A673 (cell line): ENCODE measurements at regions of chr19 and their contacts with region 1.

Region 1: DNA sequence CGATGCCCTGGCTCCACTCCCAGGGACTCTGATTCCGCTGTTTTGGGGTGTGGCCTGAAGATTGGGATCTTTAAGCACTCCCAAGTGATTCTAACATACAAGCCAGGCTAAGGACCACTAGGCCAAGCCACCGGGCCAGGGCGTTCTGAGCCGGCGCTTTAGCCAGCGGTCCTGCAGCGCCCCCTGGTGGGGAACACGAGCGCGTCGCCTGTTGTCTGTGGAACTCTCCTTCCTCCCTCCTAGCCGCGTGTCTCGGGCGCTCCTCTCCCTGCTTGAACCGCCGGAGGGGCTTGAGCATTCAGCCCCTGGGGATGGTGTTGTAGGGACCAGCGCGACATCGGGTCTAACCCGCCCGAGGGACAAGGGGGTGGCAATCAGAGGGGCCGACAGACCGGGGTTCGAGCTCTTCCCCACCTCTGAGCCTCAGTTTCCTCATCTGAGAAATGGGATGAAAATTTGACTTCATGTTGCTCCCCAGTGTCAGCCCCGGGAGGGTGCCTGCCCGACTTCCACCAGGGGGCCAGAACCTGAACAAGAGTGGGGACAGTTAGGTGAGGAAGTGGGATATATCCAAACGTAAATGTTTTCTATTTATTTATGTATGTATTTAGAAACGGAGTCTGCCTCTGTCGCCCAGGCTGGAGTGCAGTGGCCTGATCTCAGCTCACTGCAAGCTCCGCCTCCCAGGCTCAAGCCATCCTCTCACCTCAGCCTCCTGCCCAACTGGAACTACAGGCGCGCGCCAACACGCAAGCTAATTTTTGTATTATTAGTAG is 18.0 kb upstream of the PNMA8B start:
- DNase-seq: peak; percentile 86
- H3K4me3 ChIP-seq: no peak overlapping the region
- H3K27ac ChIP-seq: no peak overlapping the region
- H3K4me1 ChIP-seq: no peaks in the 10 kb centered on the region
- H3K27me3 ChIP-seq: no peaks in the 10 kb centered on the region
- CTCF ChIP-seq: peak; percentile 97

Region 2: DNA sequence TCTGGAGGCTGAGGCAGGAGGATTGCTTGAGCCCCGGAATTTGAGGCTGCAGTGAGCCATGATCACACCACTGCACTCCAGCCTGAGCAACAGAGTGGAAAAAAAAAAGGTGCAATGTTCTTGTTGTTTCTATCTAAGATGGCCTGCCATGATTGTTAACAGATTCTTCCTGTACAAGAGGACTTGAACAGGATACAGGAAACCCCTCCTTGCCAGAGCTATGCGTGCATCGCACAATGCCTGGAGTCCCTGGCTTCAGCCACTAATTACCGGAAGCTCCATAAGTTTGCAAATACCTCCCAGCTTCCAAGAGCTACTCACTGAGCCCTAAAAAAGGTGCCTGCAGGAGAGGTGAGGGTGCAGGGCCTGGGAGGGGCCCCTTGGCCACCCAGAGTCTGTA is 229.9 kb before region 1 on chr19:
- CTCF ChIA-PET with region 1: interaction called, 3 read pairs
- POLR2A ChIA-PET with region 1: no interaction called
- intact Hi-C with region 1: loop called (anchors 2 kb)
- DNase-seq: peak; percentile 47
- H3K4me3 ChIP-seq: no peak overlapping the region
- H3K27ac ChIP-seq: no peak overlapping the region
- H3K4me1 ChIP-seq: no peaks in the 10 kb centered on the region
- H3K27me3 ChIP-seq: no peaks in the 10 kb centered on the region
- CTCF ChIP-seq: no peak

Region 3: GRCh38 chr19:46529622-46530462 is 16.2 kb after region 1 on chr19:
- CTCF ChIA-PET with region 1: no interaction called
- POLR2A ChIA-PET with region 1: no interaction called
- intact Hi-C with region 1: no loop called
- DNase-seq: peak; percentile 76
- H3K4me3 ChIP-seq: no peak overlapping the region
- H3K27ac ChIP-seq: no peak overlapping the region
- H3K4me1 ChIP-seq: peaks cover 10% of the 10 kb centered on the region
- H3K27me3 ChIP-seq: no peaks in the 10 kb centered on the region
- CTCF ChIP-seq: peak; percentile 93

Region 4: DNA sequence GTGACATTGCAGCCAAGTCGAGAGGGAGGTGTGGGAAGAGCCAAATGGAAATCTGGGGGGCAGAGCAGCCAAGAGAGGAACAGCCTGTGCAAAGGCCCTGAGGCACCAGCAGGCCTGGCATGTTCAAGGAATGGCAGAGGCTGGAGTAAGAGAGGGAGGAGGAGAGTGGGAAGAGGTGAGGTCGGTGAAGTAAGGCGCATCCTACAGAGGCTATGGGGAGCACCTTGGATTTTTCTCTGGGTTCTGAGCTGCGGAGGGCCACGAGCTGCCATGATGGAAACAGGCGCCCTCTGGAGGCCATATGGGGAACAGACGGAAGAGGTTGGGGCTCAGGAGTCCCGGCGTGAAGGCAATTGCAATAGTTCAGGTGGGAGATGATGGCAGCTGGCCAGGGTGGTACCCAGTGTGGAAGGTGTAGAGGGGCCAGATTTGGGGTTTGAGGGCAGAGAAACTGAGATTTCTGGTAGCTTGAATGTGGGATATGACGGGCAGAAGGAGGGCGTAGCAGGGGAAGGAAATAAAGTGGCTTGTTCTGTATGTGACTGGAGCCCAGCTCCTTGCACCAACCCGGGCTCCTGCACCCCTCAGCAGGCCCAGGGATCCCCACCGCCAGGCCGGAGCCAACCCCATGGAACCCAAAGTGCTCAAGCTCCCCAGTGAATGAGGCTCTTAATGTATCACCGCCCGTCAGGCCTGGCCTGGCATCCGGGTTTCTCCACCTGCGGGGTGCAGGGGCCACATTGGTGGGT is 253.1 kb after region 1 on chr19:
- CTCF ChIA-PET with region 1: no interaction called
- POLR2A ChIA-PET with region 1: no interaction called
- intact Hi-C with region 1: no loop called
- DNase-seq: peak; percentile 62
- H3K4me3 ChIP-seq: no peak overlapping the region
- H3K27ac ChIP-seq: no peak overlapping the region
- H3K4me1 ChIP-seq: no peaks in the 10 kb centered on the region
- H3K27me3 ChIP-seq: no peaks in the 10 kb centered on the region
- CTCF ChIP-seq: peak; percentile 90